ENCODE measurements at regions of chr4 and their contacts with region 1.

Region 1: GRCh38 chr4:41539691-41540090 is 1.7 kb downstream of the LIMCH1 start:
- DNase-seq: no peak
- H3K4me3 ChIP-seq: no peak overlapping the region
- H3K27me3 ChIP-seq: no peaks in the 10 kb centered on the region
- CTCF ChIP-seq: no peak

Region 2: DNA sequence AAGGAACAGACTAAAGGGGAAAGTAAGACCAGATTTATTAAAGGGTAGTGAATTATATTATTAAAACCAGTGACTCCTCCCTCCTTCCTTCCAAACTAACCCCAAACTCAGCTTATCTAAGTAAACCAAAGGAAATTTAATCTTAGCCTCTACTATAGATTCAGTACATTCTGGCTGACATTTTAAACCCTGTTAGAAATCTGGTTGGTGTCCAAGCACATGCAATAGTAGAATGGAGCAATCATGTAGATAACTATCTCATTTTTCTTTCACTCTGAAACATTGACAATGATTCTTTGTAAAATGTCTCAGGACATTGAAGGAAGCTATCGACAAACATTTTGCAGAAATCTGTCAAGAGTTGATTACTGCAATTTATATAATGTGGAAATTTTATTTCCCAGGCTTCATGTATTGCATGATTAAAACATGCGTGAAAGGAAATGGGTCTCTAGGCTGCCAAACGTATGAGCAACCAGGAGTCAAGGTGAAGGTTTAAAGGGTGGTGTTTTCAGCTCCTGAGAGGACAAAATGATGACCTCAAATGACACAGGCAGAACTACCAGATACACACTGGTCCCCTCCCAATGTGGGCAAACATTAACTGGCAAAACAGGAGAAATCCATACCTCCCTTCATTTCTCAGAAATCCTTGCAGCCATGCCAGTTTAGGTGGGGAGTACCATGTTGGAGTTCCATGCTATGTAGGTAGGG is 851.9 kb before region 1 on chr4:
- CTCF ChIA-PET with region 1: no interaction called
- POLR2A ChIA-PET with region 1: no interaction called
- DNase-seq: no peak
- H3K4me3 ChIP-seq: no peak overlapping the region
- H3K27me3 ChIP-seq: no peaks in the 10 kb centered on the region
- CTCF ChIP-seq: no peak

Region 3: DNA sequence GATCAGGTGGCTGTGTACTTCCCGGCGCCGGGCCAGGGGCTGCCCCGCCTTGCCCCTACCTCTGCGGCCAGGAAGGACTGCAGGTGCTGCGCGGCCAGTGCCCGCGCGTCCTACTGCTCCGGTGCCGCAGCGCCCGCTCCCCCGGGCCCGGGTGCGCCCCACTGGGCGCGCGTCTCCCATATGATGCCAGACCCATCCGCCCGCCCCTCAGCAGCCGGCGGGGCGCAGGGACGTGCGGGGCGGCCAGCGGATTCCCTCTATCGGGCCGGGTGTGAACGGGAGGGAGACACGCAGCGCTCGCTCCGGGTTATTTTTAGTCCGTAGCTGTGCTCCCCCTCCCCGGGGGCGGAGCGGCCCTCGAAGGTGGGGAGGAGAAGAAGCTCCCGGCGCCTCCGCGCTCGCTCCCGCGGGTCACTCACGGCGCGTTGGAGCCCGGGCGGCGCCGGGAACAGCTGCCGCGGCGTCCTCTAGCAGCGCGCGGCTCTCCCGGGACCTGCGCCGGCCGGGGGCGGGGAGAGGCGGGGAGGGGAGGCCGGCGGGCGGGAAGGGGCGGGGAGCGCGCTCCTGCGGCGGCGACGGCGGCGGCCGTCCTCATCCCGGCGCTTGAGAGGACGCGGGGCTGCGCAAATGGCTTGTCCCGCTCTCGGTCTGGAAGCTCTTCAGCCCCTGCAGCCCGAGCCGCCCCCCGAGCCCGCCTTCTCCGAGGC is 179.3 kb before region 1 on chr4:
- CTCF ChIA-PET with region 1: no interaction called
- POLR2A ChIA-PET with region 1: interaction called, 19 read pairs
- DNase-seq: no peak
- H3K4me3 ChIP-seq: peak overlapping the region; percentile 56
- H3K27me3 ChIP-seq: no peaks in the 10 kb centered on the region
- CTCF ChIP-seq: no peak